ENCODE measurements at regions of chr5 and their contacts with region 1.

Region 1: GRCh38 chr5:32585446-32586275 is at the start of gene SUB1:
- DNase-seq: peak; percentile 95
- H3K4me3 Mint-ChIP-seq: peak within 1 kb of the TSS; percentile 93
- H3K27ac Mint-ChIP-seq: peak within 1 kb of the TSS; percentile 98
- H3K4me1 Mint-ChIP-seq: peaks cover 72% of the 10 kb centered on the region
- H3K27me3 Mint-ChIP-seq: no peaks in the 10 kb centered on the region
- total RNA-seq, gene SUB1: 603 to 618 TPM

Region 2: GRCh38 chr5:32232441-32233219 is 353.0 kb before region 1 on chr5:
- CTCF ChIA-PET with region 1: interaction called, 17 read pairs
- POLR2A ChIA-PET with region 1: no interaction called
- DNase-seq: peak; percentile 81
- H3K4me3 Mint-ChIP-seq: no peak overlapping the region
- H3K27ac Mint-ChIP-seq: no peak overlapping the region
- H3K4me1 Mint-ChIP-seq: peaks cover 8% of the 10 kb centered on the region
- H3K27me3 Mint-ChIP-seq: no peaks in the 10 kb centered on the region

Region 3: GRCh38 chr5:32489791-32490582 is 95.7 kb before region 1 on chr5:
- CTCF ChIA-PET with region 1: interaction called, 318 read pairs
- POLR2A ChIA-PET with region 1: interaction called, 43 read pairs
- DNase-seq: peak; percentile 73
- H3K4me3 Mint-ChIP-seq: no peak overlapping the region
- H3K27ac Mint-ChIP-seq: no peak overlapping the region
- H3K4me1 Mint-ChIP-seq: no peaks in the 10 kb centered on the region
- H3K27me3 Mint-ChIP-seq: no peaks in the 10 kb centered on the region

Region 4: DNA sequence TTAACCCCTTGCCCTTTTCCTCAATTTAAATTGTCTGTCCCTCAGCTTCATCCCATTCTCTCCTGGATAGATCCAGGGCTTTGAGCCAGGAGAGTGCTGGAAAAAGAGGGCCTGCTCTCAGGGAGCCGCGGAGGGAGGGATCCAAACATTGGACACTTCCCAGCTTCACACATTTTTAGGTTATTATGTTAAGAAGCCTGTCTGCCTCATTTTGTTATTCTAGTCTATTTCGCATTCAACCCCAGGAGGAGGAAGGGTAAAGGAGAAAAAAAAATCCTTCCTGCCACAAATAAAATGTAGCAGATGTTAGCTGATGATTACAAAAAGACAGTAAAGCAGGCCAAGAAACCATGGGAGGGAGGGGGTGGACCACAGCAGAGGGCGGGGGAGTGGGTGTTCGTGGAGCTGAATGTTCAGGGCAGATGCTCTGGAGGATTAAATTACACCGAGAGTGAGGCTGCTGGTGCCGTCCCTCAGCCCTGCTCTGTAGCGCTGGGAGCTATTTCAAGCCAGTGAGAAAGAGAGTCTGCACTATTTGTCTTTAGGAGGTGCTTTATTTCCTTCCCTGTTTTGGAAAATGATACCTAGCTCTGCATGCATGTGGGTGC is 80.6 kb before region 1 on chr5:
- CTCF ChIA-PET with region 1: interaction called, 14 read pairs
- POLR2A ChIA-PET with region 1: interaction called, 6 read pairs
- DNase-seq: no peak
- H3K4me3 Mint-ChIP-seq: no peak overlapping the region
- H3K27ac Mint-ChIP-seq: no peak overlapping the region
- H3K4me1 Mint-ChIP-seq: peaks cover 4% of the 10 kb centered on the region
- H3K27me3 Mint-ChIP-seq: peaks cover 10% of the 10 kb centered on the region

Region 5: DNA sequence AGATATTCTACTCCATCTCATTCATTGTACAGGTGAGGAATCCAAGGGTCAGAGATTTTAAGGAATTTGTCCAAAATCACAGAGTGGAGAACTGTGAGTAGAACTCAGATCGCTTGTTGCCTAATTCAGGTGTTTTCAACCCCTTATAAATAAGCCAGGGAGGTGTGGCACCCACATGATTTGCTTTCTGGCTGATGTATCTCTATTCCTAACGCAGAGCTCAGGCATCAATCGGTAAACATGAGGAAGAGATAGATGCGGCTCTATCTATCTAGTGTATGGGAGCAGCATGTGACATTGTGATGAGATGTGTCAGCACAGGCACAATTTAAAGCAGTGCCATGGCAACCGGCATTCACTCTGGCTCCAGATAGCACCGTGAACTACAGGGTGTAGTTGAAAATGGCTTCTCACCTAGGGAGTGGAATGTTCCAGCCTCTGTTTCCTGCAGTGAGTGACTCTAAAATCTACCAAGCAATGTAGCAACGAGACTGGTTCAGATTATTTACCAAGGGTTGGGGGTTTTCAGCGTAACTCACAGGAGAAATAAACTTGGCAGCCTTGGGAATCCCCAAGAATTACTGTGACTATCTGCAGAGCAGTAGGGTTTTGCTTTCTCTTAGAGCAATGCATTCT is 53.7 kb before region 1 on chr5:
- CTCF ChIA-PET with region 1: interaction called, 24 read pairs
- POLR2A ChIA-PET with region 1: interaction called, 210 read pairs
- DNase-seq: peak; percentile 73
- H3K4me3 Mint-ChIP-seq: peak overlapping the region; percentile 77
- H3K27ac Mint-ChIP-seq: peak overlapping the region; percentile 86
- H3K4me1 Mint-ChIP-seq: peaks cover 69% of the 10 kb centered on the region
- H3K27me3 Mint-ChIP-seq: no peaks in the 10 kb centered on the region

Region 6: DNA sequence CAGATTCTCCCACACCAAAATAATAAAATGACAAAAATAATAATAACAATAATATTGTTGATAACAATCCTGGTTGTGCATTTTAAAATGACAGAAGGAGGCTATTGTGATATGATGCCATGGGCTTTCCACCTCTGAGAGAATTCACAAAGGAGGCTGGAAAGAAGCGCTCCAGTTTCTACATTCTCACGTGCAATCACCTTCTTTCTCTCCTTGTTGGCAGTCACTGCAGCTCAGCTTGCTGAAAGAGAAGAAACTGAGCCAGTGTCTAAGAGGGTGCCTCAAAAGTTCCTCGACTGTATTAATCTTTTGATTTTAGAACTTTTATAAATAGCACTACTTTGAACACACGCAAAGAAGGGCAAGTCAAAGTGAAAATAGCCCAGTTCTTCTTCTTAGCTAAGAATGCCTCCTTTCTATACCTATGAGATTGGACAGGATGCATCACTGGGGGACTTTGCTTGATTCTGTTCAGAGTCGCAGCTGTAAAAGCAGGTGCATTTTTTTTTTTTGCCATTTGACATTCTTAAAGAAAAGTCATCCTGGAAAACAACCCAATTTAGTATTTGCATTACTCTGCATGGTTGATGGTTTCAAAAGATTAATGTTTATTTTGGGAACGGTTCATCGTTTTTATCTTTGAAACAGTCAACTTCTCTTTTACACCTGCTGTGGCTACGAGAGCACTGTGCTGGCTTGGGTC is 12.7 kb before region 1 on chr5:
- CTCF ChIA-PET with region 1: interaction called, 12 read pairs
- POLR2A ChIA-PET with region 1: interaction called, 7 read pairs
- DNase-seq: no peak
- H3K4me3 Mint-ChIP-seq: no peak overlapping the region
- H3K27ac Mint-ChIP-seq: no peak overlapping the region
- H3K4me1 Mint-ChIP-seq: peaks cover 28% of the 10 kb centered on the region
- H3K27me3 Mint-ChIP-seq: no peaks in the 10 kb centered on the region

Region 7: DNA sequence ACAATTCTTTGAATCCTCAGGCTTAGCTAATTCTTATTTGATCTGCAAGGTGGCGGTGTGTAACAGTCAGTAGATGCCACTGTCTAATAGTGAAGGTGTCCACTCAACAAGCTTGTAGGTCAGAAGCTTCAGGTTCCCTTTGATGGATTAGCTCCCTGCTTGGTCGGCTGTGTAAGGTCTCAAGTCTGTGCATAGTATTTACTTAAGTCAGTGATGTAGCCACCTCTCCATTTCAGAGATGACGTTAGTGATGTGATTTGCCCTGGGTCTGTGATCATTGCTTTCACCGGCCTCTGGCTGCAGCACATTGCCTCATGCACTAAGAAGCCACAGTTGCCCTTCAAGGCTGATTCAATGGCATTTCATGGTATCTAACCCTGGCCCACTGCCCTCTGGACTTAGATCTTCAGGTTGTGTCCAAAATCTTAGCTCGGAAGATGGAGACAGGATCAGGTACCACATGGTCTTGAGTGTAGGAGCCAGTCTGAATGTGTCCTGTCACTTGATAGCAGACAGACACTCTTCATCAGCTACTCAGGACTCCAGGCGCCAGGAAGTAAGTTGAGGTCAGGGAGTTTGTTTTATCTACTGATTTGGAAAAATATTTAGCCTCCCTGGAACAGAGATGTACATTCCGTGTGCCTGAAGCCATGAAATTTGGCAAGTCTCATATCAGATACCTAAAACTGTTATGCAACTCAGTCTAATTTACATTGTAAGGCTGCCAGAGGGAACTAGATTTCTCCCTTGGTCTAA is 42.6 kb after region 1 on chr5:
- CTCF ChIA-PET with region 1: no interaction called
- POLR2A ChIA-PET with region 1: no interaction called
- DNase-seq: no peak
- H3K4me3 Mint-ChIP-seq: no peak overlapping the region
- H3K27ac Mint-ChIP-seq: no peak overlapping the region
- H3K4me1 Mint-ChIP-seq: no peaks in the 10 kb centered on the region
- H3K27me3 Mint-ChIP-seq: peaks cover 4% of the 10 kb centered on the region